Vagina (tissue), 2 donors: ENCODE measurements at regions of chr18 and their contacts with region 1.

Region 1: GRCh38 chr18:1732143-1732542 is 827.5 kb downstream of the ADCYAP1 start:
- DNase-seq: no peak
- H3K4me3 ChIP-seq: no peak overlapping the region
- H3K27ac ChIP-seq: no peak overlapping the region
- H3K4me1 ChIP-seq: no peaks in the 10 kb centered on the region
- H3K27me3 ChIP-seq: no peaks in the 10 kb centered on the region
- CTCF ChIP-seq: no peak
- POLR2A ChIP-seq: no peak

Region 2: DNA sequence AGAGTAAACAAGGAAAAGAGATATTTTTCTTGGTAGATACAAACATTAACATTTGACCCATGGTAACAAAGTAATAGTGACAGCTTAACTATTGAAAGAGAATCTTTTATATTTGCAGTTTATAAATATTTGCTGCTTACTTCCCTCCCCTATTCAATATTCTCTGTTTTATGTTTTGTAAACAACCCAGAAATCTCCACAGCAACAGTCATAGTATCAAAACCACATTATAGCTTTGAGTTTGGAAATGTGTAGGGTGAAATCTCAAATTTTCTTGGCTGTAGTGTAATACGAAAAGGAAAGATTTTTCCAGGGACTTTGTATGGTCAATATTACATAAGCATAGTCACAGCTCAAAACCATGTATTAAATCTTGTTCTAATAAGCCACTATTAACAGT is 327.9 kb after region 1 on chr18:
- intact Hi-C with region 1: loop called (anchors 10 kb)
- DNase-seq: no peak
- H3K4me3 ChIP-seq: no peak overlapping the region
- H3K27ac ChIP-seq: no peak overlapping the region
- H3K4me1 ChIP-seq: no peaks in the 10 kb centered on the region
- H3K27me3 ChIP-seq: no peaks in the 10 kb centered on the region
- CTCF ChIP-seq: no peak
- POLR2A ChIP-seq: no peak

Region 3: DNA sequence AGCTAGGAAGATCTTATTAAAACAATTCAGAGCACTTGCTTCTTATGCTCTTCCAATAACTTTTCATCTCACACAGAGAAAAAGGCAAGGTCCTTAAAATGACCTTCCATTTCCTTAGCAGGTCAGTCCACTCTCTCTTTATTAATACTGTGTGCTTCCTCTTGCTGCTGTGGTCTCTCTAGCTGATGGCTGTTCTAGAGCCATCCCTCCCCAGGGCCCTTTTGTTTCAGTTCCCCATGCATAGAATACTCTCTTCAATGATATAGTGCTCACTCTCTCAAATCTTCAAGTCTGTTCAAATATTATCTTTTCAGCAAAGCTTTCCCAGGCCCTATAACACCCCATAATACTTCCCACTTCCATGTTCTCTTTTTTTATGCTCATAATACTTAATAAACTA is 369.9 kb after region 1 on chr18:
- intact Hi-C with region 1: no loop called
- DNase-seq: no peak
- H3K4me3 ChIP-seq: no peak overlapping the region
- H3K27ac ChIP-seq: no peak overlapping the region
- H3K4me1 ChIP-seq: no peaks in the 10 kb centered on the region
- H3K27me3 ChIP-seq: no peaks in the 10 kb centered on the region
- CTCF ChIP-seq: no peak
- POLR2A ChIP-seq: no peak